MCF 10A (cell line): ENCODE measurements at regions of chr3 and their contacts with region 1.

Region 1: GRCh38 chr3:183697610-183698317 is at the start of gene YEATS2:
- DNase-seq: peak; percentile 63
- H3K4me3 Mint-ChIP-seq: peak within 1 kb of the TSS; percentile 77
- H3K27ac Mint-ChIP-seq: peak within 1 kb of the TSS; percentile 87
- H3K4me1 Mint-ChIP-seq: peaks cover 24% of the 10 kb centered on the region
- H3K27me3 Mint-ChIP-seq: no peaks in the 10 kb centered on the region
- CTCF ChIP-seq: no peak
- total RNA-seq, gene YEATS2: 24.7 and 29.4 TPM in 2 replicates

Region 2: GRCh38 chr3:183502237-183503181 is 195.3 kb before region 1 on chr3:
- CTCF ChIA-PET with region 1: no interaction called
- POLR2A ChIA-PET with region 1: no interaction called
- intact Hi-C with region 1: loop called (anchors 5 kb)
- DNase-seq: peak; percentile 27
- H3K4me3 Mint-ChIP-seq: no peak overlapping the region
- H3K27ac Mint-ChIP-seq: no peak overlapping the region
- H3K4me1 Mint-ChIP-seq: peaks cover 4% of the 10 kb centered on the region
- H3K27me3 Mint-ChIP-seq: no peaks in the 10 kb centered on the region
- CTCF ChIP-seq: peak; percentile 34